ENCODE measurements at regions of chr9 and their contacts with region 1.

Region 1: GRCh38 chr9:5450359-5451091 is at the start of gene CD274:
- DNase-seq: peak; percentile 97
- H3K4me3 ChIP-seq: peak within 1 kb of the TSS; percentile 66 to 88 (median 73)
- H3K27ac ChIP-seq: peak within 1 kb of the TSS; percentile 91
- H3K4me1 ChIP-seq: peaks cover 75% of the 10 kb centered on the region
- H3K27me3 ChIP-seq: no peaks in the 10 kb centered on the region
- CTCF ChIP-seq: peak; percentile 48 to 86
- total RNA-seq, gene CD274: 19.5 to 30.6 TPM

Region 2: DNA sequence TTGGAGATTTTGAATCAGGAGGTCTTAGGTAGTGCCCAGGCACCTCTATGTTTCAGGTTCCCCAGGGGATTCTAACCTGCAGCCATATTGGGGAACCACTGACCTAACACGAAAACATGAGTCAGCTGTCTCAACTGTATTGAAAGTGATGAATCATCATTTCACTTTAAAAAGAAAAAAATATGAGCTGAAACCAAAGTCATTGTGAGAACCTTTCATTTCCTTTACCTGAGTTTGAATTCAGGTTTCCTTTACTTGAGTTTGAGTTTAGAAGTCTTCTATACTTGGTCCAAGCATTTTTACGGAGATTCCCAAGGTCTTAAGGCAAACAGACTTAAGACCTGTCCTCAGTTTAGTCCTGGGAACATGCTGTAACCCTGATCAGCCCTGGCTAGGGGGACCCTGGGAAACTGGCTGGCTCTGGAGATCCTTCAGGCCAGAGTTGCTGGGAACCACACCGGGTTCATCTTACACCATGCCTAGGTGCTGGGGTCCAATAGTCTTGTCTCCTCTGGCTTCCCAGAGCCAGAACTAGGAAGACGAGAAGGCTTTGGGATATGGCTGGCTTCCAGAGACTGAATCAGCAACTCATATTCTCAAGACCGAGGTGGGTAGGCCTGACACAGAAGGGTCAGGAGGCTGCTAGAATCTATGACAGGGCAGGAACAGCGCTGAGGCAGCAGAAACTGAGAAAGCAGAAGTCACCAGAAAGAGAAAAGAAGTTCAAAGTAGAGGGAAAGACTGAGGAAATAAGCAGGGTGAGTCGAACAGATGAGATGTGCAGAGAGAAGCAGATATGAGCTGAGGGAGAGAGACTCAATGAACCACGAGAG is 43.4 kb after region 1 on chr9:
- CTCF ChIA-PET with region 1: interaction called, 3 read pairs
- dilution Hi-C with region 1: no loop called
- in situ Hi-C with region 1: no loop called
- intact Hi-C with region 1: loop called (anchors 2 kb)
- DNase-seq: peak; percentile 89
- H3K4me3 ChIP-seq: no peak overlapping the region
- H3K27ac ChIP-seq: peak overlapping the region; percentile 96
- H3K4me1 ChIP-seq: peaks cover 25% of the 10 kb centered on the region
- H3K27me3 ChIP-seq: no peaks in the 10 kb centered on the region
- CTCF ChIP-seq: no peak

Region 3: DNA sequence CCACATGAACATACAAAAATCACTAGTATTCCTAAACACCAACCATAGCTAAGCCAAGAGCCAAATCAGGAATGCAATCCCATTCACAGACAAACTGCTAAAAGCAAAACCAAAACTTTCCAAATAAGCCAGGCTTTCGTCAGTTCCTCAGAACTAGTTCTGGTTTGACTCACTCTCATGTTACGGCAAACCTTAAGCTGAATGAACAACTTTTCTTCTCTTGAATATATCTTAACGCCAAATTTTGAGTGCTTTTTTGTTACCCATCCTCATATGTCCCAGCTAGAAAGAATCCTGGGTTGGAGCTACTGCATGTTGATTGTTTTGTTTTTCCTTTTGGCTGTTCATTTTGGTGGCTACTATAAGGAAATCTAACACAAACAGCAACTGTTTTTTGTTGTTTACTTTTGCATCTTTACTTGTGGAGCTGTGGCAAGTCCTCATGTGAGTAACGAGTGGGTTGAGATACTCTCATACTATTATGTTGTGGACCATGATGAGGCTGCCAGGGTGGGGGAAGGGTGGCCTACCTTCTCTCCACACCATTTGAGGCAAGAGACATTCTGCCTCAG is 59.9 kb after region 1 on chr9 and contains the start of gene PDCD1LG2:
- CTCF ChIA-PET with region 1: no interaction called
- dilution Hi-C with region 1: no loop called
- in situ Hi-C with region 1: no loop called
- intact Hi-C with region 1: loop called (anchors 2 kb)
- DNase-seq: peak; percentile 75
- H3K4me3 ChIP-seq: peak within 1 kb of the TSS; percentile 27 to 51 (median 47)
- H3K27ac ChIP-seq: peak within 1 kb of the TSS; percentile 89
- H3K4me1 ChIP-seq: peaks cover 54% of the 10 kb centered on the region
- H3K27me3 ChIP-seq: no peaks in the 10 kb centered on the region
- CTCF ChIP-seq: no peak
- total RNA-seq, gene PDCD1LG2: 12.1 to 14.5 TPM

Region 4: GRCh38 chr9:5566054-5566618 is 115.6 kb after region 1 on chr9:
- CTCF ChIA-PET with region 1: no interaction called
- dilution Hi-C with region 1: loop called (anchors 10 kb)
- in situ Hi-C with region 1: no loop called
- intact Hi-C with region 1: loop called (anchors 5 kb)
- DNase-seq: peak; percentile 91
- H3K4me3 ChIP-seq: no peak overlapping the region
- H3K27ac ChIP-seq: peak overlapping the region; percentile 87
- H3K4me1 ChIP-seq: peaks cover 44% of the 10 kb centered on the region
- H3K27me3 ChIP-seq: no peaks in the 10 kb centered on the region
- CTCF ChIP-seq: no peak

Region 5: GRCh38 chr9:5582835-5583195 is 132.3 kb after region 1 on chr9:
- CTCF ChIA-PET with region 1: interaction called, 5 read pairs
- dilution Hi-C with region 1: no loop called
- in situ Hi-C with region 1: loop called (anchors 10 kb)
- intact Hi-C with region 1: no loop called
- DNase-seq: peak; percentile 53
- H3K4me3 ChIP-seq: no peak overlapping the region
- H3K27ac ChIP-seq: no peak overlapping the region
- H3K4me1 ChIP-seq: peaks cover 28% of the 10 kb centered on the region
- H3K27me3 ChIP-seq: no peaks in the 10 kb centered on the region
- CTCF ChIP-seq: no peak

Region 6: GRCh38 chr9:5714501-5715401 is 264.2 kb after region 1 on chr9:
- CTCF ChIA-PET with region 1: no interaction called
- dilution Hi-C with region 1: no loop called
- in situ Hi-C with region 1: no loop called
- intact Hi-C with region 1: loop called (anchors 5 kb)
- DNase-seq: peak; percentile 49
- H3K4me3 ChIP-seq: no peak overlapping the region
- H3K27ac ChIP-seq: peak overlapping the region; percentile 14
- H3K4me1 ChIP-seq: no peaks in the 10 kb centered on the region
- H3K27me3 ChIP-seq: no peaks in the 10 kb centered on the region
- CTCF ChIP-seq: peak; percentile 70 to 71

Region 7: DNA sequence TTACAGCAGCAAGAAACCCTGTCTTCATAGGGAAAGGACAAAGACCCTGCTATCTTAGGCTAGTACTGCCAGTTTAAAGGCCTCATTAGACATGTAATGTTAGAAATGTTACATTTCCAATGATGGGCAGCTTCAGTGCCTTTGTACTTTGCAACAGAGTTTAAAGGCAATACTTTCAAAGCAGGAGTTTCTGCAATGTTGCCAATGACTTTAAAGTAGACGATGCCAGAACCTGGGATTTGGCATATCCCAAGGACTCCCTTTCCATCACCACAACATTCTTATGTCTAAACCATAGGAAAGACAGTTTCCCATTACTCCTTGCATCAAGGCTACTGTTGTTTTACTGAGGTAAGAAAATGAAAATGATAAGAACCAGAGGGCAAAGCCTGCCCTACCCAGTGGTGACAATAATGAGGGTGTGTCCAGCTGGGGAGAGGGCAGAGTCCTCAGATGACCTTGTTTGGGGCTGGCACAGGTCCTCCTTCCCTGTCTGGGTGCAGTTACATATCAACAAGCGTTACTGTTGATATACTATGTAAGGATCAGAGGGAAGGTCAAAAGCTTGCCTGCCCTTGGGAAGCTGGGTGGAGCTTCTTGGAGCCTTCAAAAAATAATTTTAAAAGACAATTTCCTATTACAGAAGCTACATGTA is 412.7 kb after region 1 on chr9:
- CTCF ChIA-PET with region 1: no interaction called
- dilution Hi-C with region 1: no loop called
- in situ Hi-C with region 1: no loop called
- intact Hi-C with region 1: no loop called
- DNase-seq: no peak
- H3K4me3 ChIP-seq: no peak overlapping the region
- H3K27ac ChIP-seq: no peak overlapping the region
- H3K4me1 ChIP-seq: no peaks in the 10 kb centered on the region
- H3K27me3 ChIP-seq: no peaks in the 10 kb centered on the region
- CTCF ChIP-seq: no peak

Region 8: GRCh38 chr9:6024020-6024554 is 573.6 kb after region 1 on chr9:
- CTCF ChIA-PET with region 1: no interaction called
- dilution Hi-C with region 1: no loop called
- in situ Hi-C with region 1: no loop called
- intact Hi-C with region 1: no loop called
- DNase-seq: no peak
- H3K4me3 ChIP-seq: no peak overlapping the region
- H3K27ac ChIP-seq: no peak overlapping the region
- H3K4me1 ChIP-seq: no peaks in the 10 kb centered on the region
- H3K27me3 ChIP-seq: no peaks in the 10 kb centered on the region
- CTCF ChIP-seq: peak; percentile 53 to 54

Measured in mammary epithelial cell (primary cell).